Naive thymus-derived CD4-positive, alpha-beta T cell (primary cell): ENCODE measurements at regions of chr2 and their contacts with region 1.

Region 1: GRCh38 chr2:112996635-112997034 is 8.6 kb upstream of the IL36A start:
- DNase-seq: peak; percentile 35 to 92 (median 90)
- ATAC-seq: peak; percentile 99
- H3K4me3 ChIP-seq: peak overlapping the region; percentile 20
- H3K4me3 Mint-ChIP-seq: peak overlapping the region; percentile 51 to 83 (median 71)
- H3K27ac ChIP-seq: peak overlapping the region; percentile 74
- H3K27ac Mint-ChIP-seq: peak overlapping the region; percentile 88 to 100 (median 97)
- H3K4me1 ChIP-seq: peaks cover 13 to 49% of the 10 kb centered on the region in 2 donors
- H3K4me1 Mint-ChIP-seq: peaks cover 29 to 73% (median 62%) of the 10 kb centered on the region in 7 donors
- H3K27me3 ChIP-seq: no peaks in the 10 kb centered on the region
- H3K27me3 Mint-ChIP-seq: peaks cover 0 to 16% (median 0%) of the 10 kb centered on the region in 5 donors

Region 2: DNA sequence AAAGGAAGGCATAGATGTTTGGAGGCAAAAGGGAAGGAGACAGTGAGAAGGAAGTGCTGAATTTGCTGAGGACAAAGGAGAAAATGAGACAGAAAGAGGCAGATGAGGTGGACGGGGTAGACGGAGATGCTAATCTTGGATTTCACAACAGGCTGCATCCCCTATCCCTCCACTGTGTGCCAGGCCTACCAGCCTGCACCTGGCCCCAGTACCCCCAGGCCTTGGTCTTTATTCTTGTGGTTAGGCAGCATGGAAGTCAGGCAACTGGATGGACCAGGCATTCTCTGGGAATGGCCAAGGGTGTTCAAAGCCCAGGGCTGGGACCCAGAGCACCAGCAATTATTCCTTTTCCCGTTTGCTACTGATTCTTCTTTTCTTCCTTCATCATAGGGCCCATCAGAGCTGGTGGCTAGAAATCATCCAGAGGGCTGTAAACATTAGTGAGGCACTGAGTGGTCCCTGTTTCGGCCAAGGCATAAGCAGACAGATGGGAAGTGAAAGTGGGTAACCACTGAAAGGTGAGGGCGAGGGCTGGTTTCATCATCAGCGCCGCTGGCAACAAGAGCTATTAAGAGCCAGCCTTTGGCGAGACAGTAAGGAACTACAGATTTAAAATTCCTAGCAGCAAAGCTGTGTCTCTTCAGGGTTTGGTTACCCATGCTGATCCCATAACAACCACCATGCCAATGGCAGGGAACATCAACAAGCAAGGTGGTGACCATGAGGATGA is 360.2 kb before region 1 on chr2:
- CTCF ChIA-PET with region 1: no interaction called
- POLR2A ChIA-PET with region 1: no interaction called
- intact Hi-C with region 1: loop called in 1 of 2 experiments (anchors 10 kb)
- DNase-seq: no peak
- ATAC-seq: no peak
- H3K4me3 ChIP-seq: no peak overlapping the region
- H3K4me3 Mint-ChIP-seq: peak overlapping the region in 6 of 10 donors; percentile 1 to 73 (median 35)
- H3K27ac ChIP-seq: no peak overlapping the region
- H3K27ac Mint-ChIP-seq: peak overlapping the region in 6 of 9 donors; percentile 16 to 95 (median 82)
- H3K4me1 ChIP-seq: peaks cover 50 to 59% of the 10 kb centered on the region in 2 donors
- H3K4me1 Mint-ChIP-seq: peaks cover 44 to 81% (median 55%) of the 10 kb centered on the region in 7 donors
- H3K27me3 ChIP-seq: no peaks in the 10 kb centered on the region
- H3K27me3 Mint-ChIP-seq: no peaks in the 10 kb centered on the region

Region 3: GRCh38 chr2:112846031-112846430 is 150.6 kb before region 1 on chr2:
- CTCF ChIA-PET with region 1: no interaction called
- POLR2A ChIA-PET with region 1: no interaction called
- intact Hi-C with region 1: no loop called
- DNase-seq: no peak
- ATAC-seq: no peak
- H3K4me3 ChIP-seq: no peak overlapping the region
- H3K4me3 Mint-ChIP-seq: no peak overlapping the region
- H3K27ac ChIP-seq: no peak overlapping the region
- H3K27ac Mint-ChIP-seq: no peak overlapping the region
- H3K4me1 ChIP-seq: no peaks in the 10 kb centered on the region
- H3K4me1 Mint-ChIP-seq: peaks cover 0 to 8% (median 0%) of the 10 kb centered on the region in 7 donors
- H3K27me3 ChIP-seq: no peaks in the 10 kb centered on the region
- H3K27me3 Mint-ChIP-seq: peaks cover 12 to 36% (median 26%) of the 10 kb centered on the region in 5 donors

Region 4: GRCh38 chr2:112958428-112959108 is 38.1 kb before region 1 on chr2:
- CTCF ChIA-PET with region 1: interaction called, 9 read pairs
- POLR2A ChIA-PET with region 1: no interaction called
- intact Hi-C with region 1: loop called in 1 of 2 experiments (anchors 1 kb)
- DNase-seq: peak in 6 of 9 donors; percentile 24 to 63 (median 52)
- ATAC-seq: peak; percentile 87
- H3K4me3 ChIP-seq: no peak overlapping the region
- H3K4me3 Mint-ChIP-seq: no peak overlapping the region
- H3K27ac ChIP-seq: no peak overlapping the region
- H3K27ac Mint-ChIP-seq: no peak overlapping the region
- H3K4me1 ChIP-seq: no peaks in the 10 kb centered on the region
- H3K4me1 Mint-ChIP-seq: no peaks in the 10 kb centered on the region
- H3K27me3 ChIP-seq: no peaks in the 10 kb centered on the region
- H3K27me3 Mint-ChIP-seq: peaks cover 0 to 8% (median 0%) of the 10 kb centered on the region in 5 donors

Region 5: GRCh38 chr2:112972423-112973086 is 24.1 kb before region 1 on chr2:
- CTCF ChIA-PET with region 1: no interaction called
- POLR2A ChIA-PET with region 1: interaction called, 4 read pairs
- intact Hi-C with region 1: loop called in 1 of 2 experiments (anchors 2 kb)
- DNase-seq: no peak
- ATAC-seq: no peak
- H3K4me3 ChIP-seq: no peak overlapping the region
- H3K4me3 Mint-ChIP-seq: no peak overlapping the region
- H3K27ac ChIP-seq: no peak overlapping the region
- H3K27ac Mint-ChIP-seq: peak overlapping the region in 1 of 9 donors; percentile 52
- H3K4me1 ChIP-seq: peaks cover 0 to 8% of the 10 kb centered on the region in 2 donors
- H3K4me1 Mint-ChIP-seq: peaks cover 5 to 28% (median 21%) of the 10 kb centered on the region in 7 donors
- H3K27me3 ChIP-seq: no peaks in the 10 kb centered on the region
- H3K27me3 Mint-ChIP-seq: peaks cover 0 to 35% (median 0%) of the 10 kb centered on the region in 5 donors

Region 6: DNA sequence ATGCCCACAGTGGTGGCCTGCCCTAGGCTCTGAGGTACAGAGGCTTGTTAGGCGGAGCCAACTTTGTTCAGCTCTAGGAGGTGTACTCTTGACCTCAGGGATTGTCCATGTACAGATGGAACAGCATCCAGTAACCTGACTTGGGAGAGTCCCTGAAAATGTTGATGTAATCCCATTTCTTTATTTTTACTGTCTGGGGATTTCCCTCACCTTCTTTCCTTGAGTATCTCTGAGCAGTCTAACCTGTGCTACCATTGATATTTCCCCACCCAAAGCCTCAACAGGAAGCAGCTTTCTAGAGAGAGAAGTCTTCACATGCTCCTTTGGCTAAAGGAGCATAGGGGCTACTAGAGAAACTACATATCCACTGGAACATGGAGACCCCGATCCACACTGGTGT is 19.0 kb after region 1 on chr2:
- CTCF ChIA-PET with region 1: no interaction called
- POLR2A ChIA-PET with region 1: no interaction called
- intact Hi-C with region 1: loop called in 1 of 2 experiments (anchors 2 kb)
- DNase-seq: peak in 1 of 9 donors; percentile 7
- ATAC-seq: no peak
- H3K4me3 ChIP-seq: no peak overlapping the region
- H3K4me3 Mint-ChIP-seq: peak overlapping the region in 1 of 10 donors; percentile 21
- H3K27ac ChIP-seq: no peak overlapping the region
- H3K27ac Mint-ChIP-seq: peak overlapping the region in 1 of 9 donors; percentile 80
- H3K4me1 ChIP-seq: peaks cover 0 to 8% of the 10 kb centered on the region in 2 donors
- H3K4me1 Mint-ChIP-seq: peaks cover 0 to 34% (median 20%) of the 10 kb centered on the region in 7 donors
- H3K27me3 ChIP-seq: peaks cover 0 to 3% of the 10 kb centered on the region in 2 donors
- H3K27me3 Mint-ChIP-seq: peaks cover 0 to 53% (median 5%) of the 10 kb centered on the region in 5 donors

Region 7: DNA sequence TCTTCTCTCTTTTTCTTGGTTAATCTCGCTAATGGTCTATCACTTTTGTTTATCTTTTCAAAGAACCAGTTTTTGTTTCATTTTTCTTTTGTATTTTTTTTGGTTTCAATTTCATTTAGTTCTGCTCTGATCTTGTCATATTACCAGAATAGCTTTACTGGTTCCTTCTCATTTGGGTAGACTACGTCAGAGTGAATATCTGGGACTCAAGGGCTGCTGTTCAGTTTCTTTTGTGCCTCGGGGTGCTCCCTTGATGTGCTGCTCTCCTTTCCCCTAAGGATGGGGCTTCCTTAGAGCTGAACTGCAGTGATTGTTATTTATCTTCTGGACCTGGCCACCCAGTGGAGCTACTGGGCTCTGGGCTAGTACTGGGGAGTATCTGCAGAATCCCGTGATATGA is 101.4 kb after region 1 on chr2:
- CTCF ChIA-PET with region 1: no interaction called
- POLR2A ChIA-PET with region 1: interaction called, 3 read pairs
- intact Hi-C with region 1: loop called in 1 of 2 experiments (anchors 2 kb)
- DNase-seq: peak in 6 of 9 donors; percentile 12 to 54 (median 32)
- ATAC-seq: peak; percentile 63
- H3K4me3 ChIP-seq: no peak overlapping the region
- H3K4me3 Mint-ChIP-seq: peak overlapping the region; percentile 19 to 77 (median 60)
- H3K27ac ChIP-seq: no peak overlapping the region
- H3K27ac Mint-ChIP-seq: peak overlapping the region; percentile 2 to 79 (median 44)
- H3K4me1 ChIP-seq: peaks cover 5% of the 10 kb centered on the region in 2 donors
- H3K4me1 Mint-ChIP-seq: peaks cover 7 to 39% (median 11%) of the 10 kb centered on the region in 7 donors
- H3K27me3 ChIP-seq: peaks cover 0 to 3% of the 10 kb centered on the region in 2 donors
- H3K27me3 Mint-ChIP-seq: peaks cover 0 to 6% (median 0%) of the 10 kb centered on the region in 5 donors

Region 8: GRCh38 chr2:113167115-113167932 is 170.7 kb after region 1 on chr2:
- CTCF ChIA-PET with region 1: no interaction called
- POLR2A ChIA-PET with region 1: no interaction called
- intact Hi-C with region 1: loop called (anchors 2 kb)
- DNase-seq: peak in 6 of 9 donors; percentile 38 to 45 (median 41)
- ATAC-seq: peak; percentile 72
- H3K4me3 ChIP-seq: peak overlapping the region; percentile 34
- H3K4me3 Mint-ChIP-seq: peak overlapping the region; percentile 57 to 87 (median 78)
- H3K27ac ChIP-seq: peak overlapping the region; percentile 87
- H3K27ac Mint-ChIP-seq: peak overlapping the region; percentile 88 to 100 (median 97)
- H3K4me1 ChIP-seq: peaks cover 40 to 74% of the 10 kb centered on the region in 2 donors
- H3K4me1 Mint-ChIP-seq: peaks cover 61 to 88% (median 80%) of the 10 kb centered on the region in 7 donors
- H3K27me3 ChIP-seq: no peaks in the 10 kb centered on the region
- H3K27me3 Mint-ChIP-seq: no peaks in the 10 kb centered on the region